Activated CD4-positive, alpha-beta T cell treated with anti-CD3 and anti-CD28 coated beads for 36 hours (primary cell): ENCODE measurements at regions of chr1 and their contacts with region 1.

Region 1: GRCh38 chr1:110209715-110210603 is at the start of gene KCNC4:
- DNase-seq: peak; percentile 95
- ATAC-seq: peak; percentile 88
- H3K4me3 Mint-ChIP-seq: peak within 1 kb of the TSS; percentile 82
- H3K27ac Mint-ChIP-seq: peak within 1 kb of the TSS; percentile 81
- H3K4me1 Mint-ChIP-seq: peaks cover 49% of the 10 kb centered on the region
- H3K27me3 Mint-ChIP-seq: no peaks in the 10 kb centered on the region
- total RNA-seq, gene KCNC4: 13.9 to 14.3 TPM

Region 2: DNA sequence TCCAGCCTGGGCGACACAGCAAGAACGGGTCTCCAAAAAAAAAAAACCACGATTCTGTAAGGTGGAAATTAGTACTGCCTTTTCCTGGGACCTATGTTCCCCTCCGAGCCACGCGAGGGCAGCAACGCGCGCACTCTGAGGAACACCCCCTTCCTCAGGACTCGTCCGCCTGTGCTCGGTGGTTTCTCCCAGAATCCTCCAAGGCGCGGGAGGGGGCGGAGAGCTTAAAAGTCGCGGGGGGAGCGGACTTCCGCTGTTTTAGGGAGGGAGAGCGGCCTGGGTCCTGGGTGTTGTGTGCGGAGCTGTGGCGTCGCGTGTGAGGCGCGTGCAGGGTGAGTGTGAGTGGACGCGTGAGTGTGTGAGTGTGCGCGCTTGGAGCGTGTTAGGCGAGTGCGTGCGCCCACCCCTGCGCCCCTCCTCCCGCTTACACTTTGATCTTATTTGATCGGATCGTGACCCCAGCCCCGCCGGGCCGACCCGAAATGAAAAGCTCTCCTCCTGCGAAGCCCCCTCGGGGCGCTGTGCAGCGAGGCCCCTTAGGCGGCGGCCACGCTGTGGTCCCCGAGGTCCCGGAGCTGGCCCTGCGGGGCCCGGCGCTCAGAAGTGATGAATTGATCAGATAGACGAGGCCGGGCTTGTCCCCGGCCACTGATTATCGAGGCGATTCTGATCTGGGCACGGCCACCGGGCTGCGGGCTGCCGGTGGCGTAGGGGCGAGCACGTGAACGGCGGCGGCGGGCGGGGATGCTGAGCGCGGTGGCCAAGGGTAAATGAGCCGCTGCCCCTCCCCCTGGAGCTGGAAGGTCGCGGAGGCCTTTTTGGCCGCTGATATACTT is 1109.8 kb before region 1 on chr1:
- CTCF ChIA-PET with region 1: no interaction called
- POLR2A ChIA-PET with region 1: interaction called, 11 read pairs
- intact Hi-C with region 1: no loop called
- DNase-seq: peak; percentile 98
- ATAC-seq: peak; percentile 94
- H3K4me3 Mint-ChIP-seq: peak overlapping the region; percentile 98
- H3K27ac Mint-ChIP-seq: peak overlapping the region; percentile 98
- H3K4me1 Mint-ChIP-seq: peaks cover 6% of the 10 kb centered on the region
- H3K27me3 Mint-ChIP-seq: no peaks in the 10 kb centered on the region

Region 3: GRCh38 chr1:110235834-110236682 is 26.1 kb after region 1 on chr1:
- CTCF ChIA-PET with region 1: interaction called, 28 read pairs
- POLR2A ChIA-PET with region 1: no interaction called
- intact Hi-C with region 1: loop called (anchors 1 kb)
- DNase-seq: peak; percentile 85
- ATAC-seq: peak; percentile 90
- H3K4me3 Mint-ChIP-seq: peak overlapping the region; percentile 42
- H3K27ac Mint-ChIP-seq: peak overlapping the region; percentile 95
- H3K4me1 Mint-ChIP-seq: peaks cover 57% of the 10 kb centered on the region
- H3K27me3 Mint-ChIP-seq: no peaks in the 10 kb centered on the region

Region 4: GRCh38 chr1:110262846-110263631 is 53.1 kb after region 1 on chr1:
- CTCF ChIA-PET with region 1: interaction called, 10 read pairs
- POLR2A ChIA-PET with region 1: interaction called, 3 read pairs
- intact Hi-C with region 1: loop called (anchors 2 kb)
- DNase-seq: peak; percentile 36
- ATAC-seq: peak; percentile 91
- H3K4me3 Mint-ChIP-seq: no peak overlapping the region
- H3K27ac Mint-ChIP-seq: no peak overlapping the region
- H3K4me1 Mint-ChIP-seq: no peaks in the 10 kb centered on the region
- H3K27me3 Mint-ChIP-seq: peaks cover 1% of the 10 kb centered on the region

Region 5: GRCh38 chr1:110312188-110313121 is 102.5 kb after region 1 on chr1:
- CTCF ChIA-PET with region 1: interaction called, 547 read pairs
- POLR2A ChIA-PET with region 1: interaction called, 10 read pairs
- intact Hi-C with region 1: loop called (anchors 1 kb)
- DNase-seq: peak; percentile 86
- ATAC-seq: peak; percentile 98
- H3K4me3 Mint-ChIP-seq: no peak overlapping the region
- H3K27ac Mint-ChIP-seq: no peak overlapping the region
- H3K4me1 Mint-ChIP-seq: no peaks in the 10 kb centered on the region
- H3K27me3 Mint-ChIP-seq: no peaks in the 10 kb centered on the region

Region 6: GRCh38 chr1:110460253-110461220 is 250.6 kb after region 1 on chr1:
- CTCF ChIA-PET with region 1: interaction called, 87 read pairs
- POLR2A ChIA-PET with region 1: no interaction called
- intact Hi-C with region 1: loop called in 1 of 2 experiments (anchors 1 kb)
- DNase-seq: peak; percentile 88
- ATAC-seq: peak; percentile 95
- H3K4me3 Mint-ChIP-seq: no peak overlapping the region
- H3K27ac Mint-ChIP-seq: no peak overlapping the region
- H3K4me1 Mint-ChIP-seq: no peaks in the 10 kb centered on the region
- H3K27me3 Mint-ChIP-seq: no peaks in the 10 kb centered on the region